Endothelial cell of umbilical vein (primary cell): ENCODE measurements at regions of chr13 and their contacts with region 1.

Region 1: GRCh38 chr13:21075011-21075898 is 13.9 kb upstream of the LATS2 start:
- DNase-seq: peak; percentile 59
- H3K4me3 ChIP-seq: peak overlapping the region in 2 of 3 experiments; percentile 51 to 52
- H3K27ac ChIP-seq: peak overlapping the region; percentile 95
- H3K4me1 ChIP-seq: peaks cover 31% of the 10 kb centered on the region
- H3K27me3 ChIP-seq: no peaks in the 10 kb centered on the region
- CTCF ChIP-seq: no peak
- POLR2A ChIP-seq: peak; percentile 76

Region 2: DNA sequence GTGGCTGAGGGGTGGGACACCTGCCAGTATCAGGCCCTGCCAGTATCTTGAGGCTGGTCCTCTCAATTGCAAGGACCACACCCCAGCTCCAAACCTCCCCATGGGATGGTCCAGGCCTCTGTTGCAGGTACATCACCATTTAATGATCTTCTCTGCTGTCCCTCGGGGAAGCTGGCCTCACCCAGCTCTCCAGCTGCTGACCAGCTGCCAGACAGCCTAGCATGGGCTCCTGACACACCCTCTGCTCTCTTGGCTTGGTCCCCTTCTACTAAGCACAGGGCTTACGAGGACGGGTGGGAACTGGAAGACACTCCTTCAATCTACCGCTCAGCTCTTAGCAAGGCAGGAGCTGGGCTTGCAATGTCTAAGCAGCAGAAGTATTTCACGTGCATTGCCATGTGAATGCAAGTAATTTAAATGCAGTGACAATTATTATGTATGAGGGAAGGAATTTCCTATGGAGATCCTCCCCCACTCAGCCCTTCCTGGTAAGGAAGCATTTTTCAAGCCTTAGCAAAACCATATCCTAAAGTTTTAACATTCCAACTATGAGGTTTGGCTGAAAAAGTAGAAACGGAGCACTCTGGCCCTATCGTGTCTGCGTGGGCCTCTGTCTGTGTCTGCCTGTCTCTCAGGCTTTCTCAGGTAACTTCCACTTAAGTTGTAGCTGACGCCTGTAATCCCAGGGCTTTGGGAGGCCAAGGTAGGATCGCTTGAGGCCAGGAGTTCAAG is 77.7 kb before region 1 on chr13:
- CTCF ChIA-PET with region 1: no interaction called
- POLR2A ChIA-PET with region 1: no interaction called
- dilution Hi-C with region 1: no loop called
- intact Hi-C with region 1: loop called (anchors 5 kb)
- DNase-seq: peak; percentile 65
- H3K4me3 ChIP-seq: no peak overlapping the region
- H3K27ac ChIP-seq: peak overlapping the region; percentile 46
- H3K4me1 ChIP-seq: peaks cover 16% of the 10 kb centered on the region
- H3K27me3 ChIP-seq: no peaks in the 10 kb centered on the region
- CTCF ChIP-seq: no peak
- POLR2A ChIP-seq: no peak

Region 3: DNA sequence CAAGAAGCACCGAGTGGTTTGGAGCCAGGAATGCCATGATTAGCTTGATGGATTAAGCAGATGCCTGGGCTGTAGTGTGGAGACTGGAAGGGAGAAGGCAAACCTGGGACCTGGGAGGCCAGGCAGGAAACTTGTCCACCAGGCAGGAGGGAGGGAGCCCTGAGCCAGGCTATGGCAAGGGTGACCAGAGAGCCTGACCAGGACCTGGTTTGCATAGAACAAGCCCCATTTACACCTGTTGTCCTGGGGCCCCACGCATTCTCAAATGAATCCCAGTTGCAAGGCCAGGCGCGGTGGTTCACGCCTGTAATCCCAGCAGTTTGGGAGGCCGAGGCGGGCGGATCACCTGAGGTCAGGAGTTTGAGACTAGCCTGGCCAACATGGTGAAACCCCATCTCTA is 36.3 kb after region 1 on chr13:
- CTCF ChIA-PET with region 1: no interaction called
- POLR2A ChIA-PET with region 1: no interaction called
- dilution Hi-C with region 1: no loop called
- intact Hi-C with region 1: loop called (anchors 2 kb)
- DNase-seq: no peak
- H3K4me3 ChIP-seq: no peak overlapping the region
- H3K27ac ChIP-seq: no peak overlapping the region
- H3K4me1 ChIP-seq: no peaks in the 10 kb centered on the region
- H3K27me3 ChIP-seq: no peaks in the 10 kb centered on the region
- CTCF ChIP-seq: no peak
- POLR2A ChIP-seq: no peak

Region 4: GRCh38 chr13:21256351-21256761 is 181.1 kb after region 1 on chr13:
- CTCF ChIA-PET with region 1: no interaction called
- POLR2A ChIA-PET with region 1: no interaction called
- dilution Hi-C with region 1: no loop called
- intact Hi-C with region 1: no loop called
- DNase-seq: no peak
- H3K4me3 ChIP-seq: no peak overlapping the region
- H3K27ac ChIP-seq: no peak overlapping the region
- H3K4me1 ChIP-seq: no peaks in the 10 kb centered on the region
- H3K27me3 ChIP-seq: peaks cover 1 to 9% of the 10 kb centered on the region in 2 experiments
- CTCF ChIP-seq: no peak
- POLR2A ChIP-seq: no peak